Activated B cell treated with CpG ODN at 0.5 μM for 24 hours (primary cell): ENCODE measurements at regions of chr2 and their contacts with region 1.

Region 1: DNA sequence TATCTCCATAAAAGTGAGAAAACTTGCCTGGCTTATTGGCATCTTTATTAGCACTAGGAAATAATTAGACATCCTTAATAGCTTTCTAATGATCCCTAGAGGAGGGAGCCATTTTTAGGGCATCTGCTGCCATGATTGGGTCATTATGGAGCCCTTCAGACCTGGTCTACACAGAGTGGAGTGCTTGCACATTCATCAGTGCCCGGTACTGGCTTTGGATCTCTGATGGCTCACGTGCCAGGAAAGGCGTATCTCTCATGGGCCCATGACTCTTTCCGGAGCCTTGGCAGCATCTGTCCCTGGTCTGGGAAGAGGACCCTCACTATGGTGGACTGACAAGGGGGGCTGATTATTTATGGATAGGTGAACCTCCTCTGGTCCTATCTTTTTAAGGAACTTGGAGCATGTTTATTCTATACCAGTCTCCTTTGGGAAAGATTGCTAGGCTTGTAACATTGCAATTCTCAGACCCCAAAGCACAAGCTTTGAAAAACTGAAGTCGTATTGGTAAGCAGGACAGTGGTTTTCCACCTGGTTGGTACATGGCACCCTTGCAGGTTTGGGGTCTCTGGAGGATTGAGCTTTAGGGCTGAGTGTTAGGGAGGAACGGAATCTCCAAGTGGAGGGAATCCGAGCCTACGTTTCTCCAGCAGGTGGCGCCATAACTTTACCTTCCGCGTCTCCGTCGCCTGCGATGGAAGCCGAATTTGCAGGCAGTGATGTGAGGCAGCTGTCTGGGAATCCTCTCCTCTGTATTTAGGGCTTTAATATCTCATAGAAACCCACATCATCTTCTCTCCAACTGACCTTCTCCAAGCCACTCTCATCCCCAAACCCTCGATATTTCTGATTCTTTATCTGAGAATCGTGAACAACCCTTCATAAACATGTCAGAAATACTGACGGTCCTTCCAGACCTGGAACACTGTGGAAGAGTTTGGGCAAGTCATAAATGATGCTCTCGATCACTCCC is 27.8 kb downstream of the SIX2 start:
- DNase-seq: peak; percentile 50
- ATAC-seq: no peak
- H3K4me3 Mint-ChIP-seq: no peak overlapping the region
- H3K27ac Mint-ChIP-seq: no peak overlapping the region
- H3K4me1 Mint-ChIP-seq: peaks cover 2% of the 10 kb centered on the region
- H3K27me3 Mint-ChIP-seq: peaks cover 8% of the 10 kb centered on the region
- CTCF ChIP-seq: peak; percentile 37

Region 2: GRCh38 chr2:45494269-45494977 is 513.0 kb after region 1 on chr2:
- CTCF ChIA-PET with region 1: interaction called, 126 read pairs
- POLR2A ChIA-PET with region 1: no interaction called
- intact Hi-C with region 1: loop called (anchors 1 kb)
- DNase-seq: no peak
- ATAC-seq: no peak
- H3K4me3 Mint-ChIP-seq: no peak overlapping the region
- H3K27ac Mint-ChIP-seq: no peak overlapping the region
- H3K4me1 Mint-ChIP-seq: peaks cover 16% of the 10 kb centered on the region
- H3K27me3 Mint-ChIP-seq: no peaks in the 10 kb centered on the region
- CTCF ChIP-seq: peak; percentile 50